ENCODE measurements at regions of chr16 and their contacts with region 1.

Region 1: GRCh38 chr16:24943473-24943872 is 71.7 kb downstream of the ARHGAP17 start:
- DNase-seq: no peak
- H3K4me3 ChIP-seq: no peak overlapping the region
- H3K27ac ChIP-seq: no peak overlapping the region
- H3K4me1 ChIP-seq: no peaks in the 10 kb centered on the region
- H3K27me3 ChIP-seq: no peaks in the 10 kb centered on the region
- CTCF ChIP-seq: no peak

Region 2: DNA sequence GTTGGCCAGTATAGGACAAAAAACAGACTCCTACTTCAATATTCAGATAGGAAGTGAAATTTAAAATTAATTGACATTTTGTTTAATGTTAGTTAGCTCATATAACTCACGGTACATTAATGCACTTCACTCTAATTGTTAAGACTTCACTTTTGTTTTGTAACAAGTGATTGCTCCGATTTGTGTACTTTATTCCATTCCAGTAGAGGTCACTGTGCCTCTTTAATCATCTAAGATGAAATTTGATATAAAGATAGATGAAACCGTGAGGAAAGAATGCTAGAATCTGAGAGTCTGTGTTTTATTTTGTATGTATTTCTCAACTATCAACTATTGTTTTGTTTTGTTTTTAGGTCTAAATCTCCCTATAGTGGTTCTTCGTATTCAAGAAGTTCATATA is 375.1 kb before region 1 on chr16:
- intact Hi-C with region 1: loop called (anchors 10 kb)
- DNase-seq: no peak
- H3K4me3 ChIP-seq: no peak overlapping the region
- H3K27ac ChIP-seq: no peak overlapping the region
- H3K4me1 ChIP-seq: no peaks in the 10 kb centered on the region
- H3K27me3 ChIP-seq: no peaks in the 10 kb centered on the region
- CTCF ChIP-seq: peak; percentile 14

Region 3: DNA sequence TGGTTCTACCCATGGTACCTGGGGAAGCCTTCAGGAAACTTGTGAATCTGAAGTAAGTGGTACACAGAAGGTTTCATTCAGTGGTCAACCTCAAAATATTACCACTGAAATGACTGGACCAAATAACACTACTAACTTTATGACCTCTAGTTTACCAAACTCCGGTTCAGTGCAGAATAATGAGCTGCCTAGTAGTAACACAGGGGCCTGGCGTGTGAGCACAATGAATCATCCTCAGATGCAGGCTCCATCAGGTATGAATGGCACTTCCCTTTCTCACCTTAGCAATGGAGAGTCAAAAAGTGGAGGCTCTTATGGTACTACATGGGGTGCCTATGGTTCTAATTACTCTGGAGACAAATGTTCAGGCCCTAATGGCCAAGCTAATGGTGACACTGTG is 153.6 kb before region 1 on chr16:
- intact Hi-C with region 1: loop called (anchors 5 kb)
- DNase-seq: no peak
- H3K4me3 ChIP-seq: no peak overlapping the region
- H3K27ac ChIP-seq: no peak overlapping the region
- H3K4me1 ChIP-seq: peaks cover 0 to 8% (median 0%) of the 10 kb centered on the region in 4 donors
- H3K27me3 ChIP-seq: no peaks in the 10 kb centered on the region
- CTCF ChIP-seq: no peak

Region 4: DNA sequence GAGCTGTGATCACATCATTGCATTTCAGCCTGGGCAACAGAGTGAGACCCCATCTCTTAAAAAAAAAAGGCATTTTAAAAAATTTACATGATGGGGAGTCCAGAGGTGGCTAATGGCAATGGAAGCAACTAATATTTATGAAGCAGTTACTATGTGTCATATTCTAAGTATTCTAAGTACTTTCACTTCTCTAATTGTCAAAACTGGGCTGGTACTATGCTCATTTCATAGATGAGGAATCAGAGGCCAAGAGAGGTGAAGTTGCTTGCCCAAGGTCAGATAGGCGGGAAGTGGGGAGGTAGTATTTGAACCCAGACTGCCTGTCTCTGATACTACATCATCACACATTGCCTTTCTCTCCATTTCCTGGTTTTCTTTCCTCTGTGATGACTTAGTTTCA is 47.0 kb before region 1 on chr16:
- intact Hi-C with region 1: no loop called
- DNase-seq: no peak
- H3K4me3 ChIP-seq: no peak overlapping the region
- H3K27ac ChIP-seq: no peak overlapping the region
- H3K4me1 ChIP-seq: no peaks in the 10 kb centered on the region
- H3K27me3 ChIP-seq: peaks cover 0 to 2% of the 10 kb centered on the region in 2 donors
- CTCF ChIP-seq: no peak

Region 5: DNA sequence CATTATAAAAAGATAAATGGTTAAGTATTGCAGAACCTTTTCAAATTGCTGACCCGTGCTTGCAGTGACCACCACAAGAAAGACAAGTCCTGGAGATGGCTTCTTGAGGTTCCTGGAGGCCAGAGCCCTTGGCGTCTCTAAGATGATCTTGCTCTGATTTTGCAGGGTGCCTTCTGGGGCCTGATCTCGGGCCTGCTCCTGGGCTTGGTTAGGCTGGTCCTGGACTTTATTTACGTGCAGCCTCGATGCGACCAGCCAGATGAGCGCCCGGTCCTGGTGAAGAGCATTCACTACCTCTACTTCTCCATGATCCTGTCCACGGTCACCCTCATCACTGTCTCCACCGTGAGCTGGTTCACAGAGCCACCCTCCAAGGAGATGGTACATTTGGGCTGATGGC is 34.8 kb before region 1 on chr16:
- intact Hi-C with region 1: no loop called
- DNase-seq: no peak
- H3K4me3 ChIP-seq: no peak overlapping the region
- H3K27ac ChIP-seq: no peak overlapping the region
- H3K4me1 ChIP-seq: no peaks in the 10 kb centered on the region
- H3K27me3 ChIP-seq: no peaks in the 10 kb centered on the region
- CTCF ChIP-seq: no peak

Region 6: DNA sequence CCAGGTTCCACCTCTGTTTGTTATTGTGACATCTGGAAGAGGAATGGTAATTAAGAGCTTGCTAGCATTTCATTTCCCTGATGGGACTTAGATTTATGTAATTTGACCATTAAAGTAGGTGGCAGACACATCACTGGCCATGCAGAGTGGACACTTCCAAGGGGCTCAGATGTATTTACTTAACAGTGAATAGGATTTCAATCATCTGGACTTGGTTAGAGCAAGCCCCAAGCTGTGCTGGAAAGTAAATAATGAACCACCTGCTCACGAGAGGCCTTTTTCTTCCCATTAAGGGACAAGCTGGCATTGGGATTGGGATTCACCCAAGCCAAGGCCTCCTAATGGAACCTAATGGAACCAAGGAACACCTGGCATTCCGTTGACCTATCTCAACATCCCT is 1143.6 kb after region 1 on chr16:
- intact Hi-C with region 1: no loop called
- DNase-seq: no peak
- H3K4me3 ChIP-seq: no peak overlapping the region
- H3K27ac ChIP-seq: no peak overlapping the region
- H3K4me1 ChIP-seq: no peaks in the 10 kb centered on the region
- H3K27me3 ChIP-seq: no peaks in the 10 kb centered on the region
- CTCF ChIP-seq: no peak

Measured in tibial artery (tissue), 4 donors.